HepG2 (cell line): ENCODE measurements at regions of chr17 and their contacts with region 1.

Region 1: GRCh38 chr17:45148183-45149036 is at the start of gene HEXIM1:
- DNase-seq: peak; percentile 100
- ATAC-seq: peak; percentile 78
- H3K4me3 ChIP-seq: peak within 1 kb of the TSS; percentile 97 to 98 (median 97)
- H3K27ac ChIP-seq: peak within 1 kb of the TSS; percentile 97
- H3K4me1 ChIP-seq: peaks cover 24% of the 10 kb centered on the region
- H3K27me3 ChIP-seq: no peaks in the 10 kb centered on the region; a peak in 2 of 5 replicates
- CTCF ChIP-seq: peak; percentile 28
- EP300 ChIP-seq: peak; percentile 73 to 89
- POLR2A ChIP-seq: peak; percentile 100
- RAD21 ChIP-seq: peak; percentile 84
- total RNA-seq, gene HEXIM1: 10.5 and 14.8 TPM in 2 replicates

Region 2: GRCh38 chr17:45073414-45074070 is 74.9 kb before region 1 on chr17:
- CTCF ChIA-PET with region 1: no interaction called
- POLR2A ChIA-PET with region 1: no interaction called
- in situ Hi-C with region 1: no loop called
- intact Hi-C with region 1: no loop called
- DNase-seq: no peak
- ATAC-seq: no peak
- H3K4me3 ChIP-seq: no peak overlapping the region
- H3K27ac ChIP-seq: no peak overlapping the region
- H3K4me1 ChIP-seq: peaks cover 8% of the 10 kb centered on the region; the same call in 1 of the 2 replicates
- H3K27me3 ChIP-seq: no peaks in the 10 kb centered on the region
- CTCF ChIP-seq: no peak
- EP300 ChIP-seq: no peak
- POLR2A ChIP-seq: no peak
- RAD21 ChIP-seq: no peak

Region 3: GRCh38 chr17:45135192-45135977 is 13.0 kb before region 1 on chr17 and contains the start of gene ACBD4:
- CTCF ChIA-PET with region 1: interaction called, 60 read pairs
- POLR2A ChIA-PET with region 1: interaction called, 217 read pairs
- in situ Hi-C with region 1: no loop called
- intact Hi-C with region 1: loop called (anchors 1 kb)
- DNase-seq: peak; percentile 100
- ATAC-seq: peak; percentile 85
- H3K4me3 ChIP-seq: peak within 1 kb of the TSS; percentile 70 to 83 (median 78)
- H3K27ac ChIP-seq: peak within 1 kb of the TSS; percentile 64
- H3K4me1 ChIP-seq: peaks cover 43% of the 10 kb centered on the region
- H3K27me3 ChIP-seq: no peaks in the 10 kb centered on the region
- CTCF ChIP-seq: peak; percentile 100
- EP300 ChIP-seq: peak in 1 of 2 experiments; percentile 41; a peak in 2 of 4 replicates
- POLR2A ChIP-seq: peak; percentile 71 to 97
- RAD21 ChIP-seq: peak; percentile 100
- total RNA-seq, gene ACBD4: 8.8 and 16.1 TPM in 2 replicates

Region 4: DNA sequence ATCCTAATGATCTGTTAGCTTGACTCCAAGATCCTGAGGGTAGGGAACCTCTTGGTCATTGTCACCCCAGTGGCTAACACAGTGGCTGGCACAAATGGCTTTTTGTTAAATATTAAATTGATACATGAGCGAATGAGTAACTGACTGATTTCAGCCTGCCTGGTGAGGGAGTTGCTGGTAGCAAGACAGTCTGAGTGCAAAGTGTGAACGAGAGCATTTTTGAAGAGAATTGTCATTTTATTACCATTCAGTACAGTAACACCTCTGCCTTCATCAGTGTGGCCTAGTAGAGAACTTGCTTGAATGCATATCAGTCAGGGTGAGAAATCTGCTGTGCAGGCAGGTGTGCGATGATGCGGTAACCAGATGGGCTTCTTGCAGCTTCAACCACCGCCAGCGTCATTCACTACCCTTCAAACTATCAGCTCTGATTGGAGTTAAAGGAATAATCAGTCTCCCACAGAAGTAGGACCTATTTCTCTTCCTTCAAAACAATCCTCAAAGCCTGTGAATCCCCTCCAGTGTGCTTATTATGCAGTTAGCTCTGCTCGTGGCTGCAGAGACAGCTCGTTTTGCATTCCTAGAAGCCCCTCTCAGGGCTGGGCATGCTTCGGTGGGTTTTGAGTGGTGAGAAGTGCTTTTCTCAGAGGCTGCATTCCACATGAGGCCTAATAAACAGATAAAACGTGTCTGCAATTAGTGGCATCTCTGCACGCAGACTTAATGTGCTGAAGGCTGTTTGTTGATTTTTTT is 42.3 kb after region 1 on chr17:
- CTCF ChIA-PET with region 1: interaction called, 130 read pairs
- POLR2A ChIA-PET with region 1: interaction called, 551 read pairs
- in situ Hi-C with region 1: loop called (anchors 5 kb)
- intact Hi-C with region 1: no loop called
- DNase-seq: no peak
- ATAC-seq: peak; percentile 29
- H3K4me3 ChIP-seq: 0 out of 6 replicates have a peak overlapping the region, but pooled peaks of 1 of the 3 experiments have one; percentile 11
- H3K27ac ChIP-seq: no peak overlapping the region
- H3K4me1 ChIP-seq: peaks cover 52% of the 10 kb centered on the region
- H3K27me3 ChIP-seq: no peaks in the 10 kb centered on the region
- CTCF ChIP-seq: no peak
- EP300 ChIP-seq: no peak
- POLR2A ChIP-seq: no peak
- RAD21 ChIP-seq: no peak

Region 5: DNA sequence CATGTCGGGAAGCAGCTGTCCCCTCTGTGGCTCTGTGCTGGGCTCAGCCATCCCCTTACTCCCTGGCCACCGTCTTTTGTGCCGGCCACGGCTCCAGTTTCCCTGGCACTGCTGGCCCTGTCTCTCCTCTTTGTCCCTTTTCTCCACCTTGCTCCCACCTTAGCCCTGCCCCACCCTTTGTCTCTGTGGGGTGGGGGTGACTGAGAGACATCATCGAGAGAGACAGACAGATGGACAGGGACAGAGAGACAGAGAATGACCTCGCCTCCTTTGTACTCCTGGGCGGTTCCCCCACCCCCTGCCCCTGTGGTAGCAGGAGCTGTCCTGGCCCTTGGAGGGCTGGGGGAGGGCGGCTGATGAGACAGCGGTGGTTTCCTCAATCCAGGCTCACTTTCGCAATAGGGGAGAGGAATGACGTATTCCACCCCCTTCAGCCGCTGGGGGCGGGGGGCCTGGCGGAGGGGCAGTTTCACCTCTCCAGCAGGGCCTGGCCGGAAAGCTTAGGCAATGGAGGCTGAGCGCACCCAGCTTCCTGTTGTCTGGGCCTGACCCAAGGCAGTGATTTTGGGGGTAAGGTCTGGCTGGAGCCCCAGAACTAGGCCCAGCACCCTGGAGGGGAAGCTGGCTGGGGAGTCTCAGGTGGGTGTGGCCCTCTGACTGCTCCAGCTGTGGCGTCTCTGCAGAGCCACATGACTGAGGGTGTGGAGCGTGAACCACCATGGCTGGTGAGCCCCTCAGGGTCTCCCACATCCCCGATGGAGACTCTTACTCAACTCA is 80.5 kb after region 1 on chr17:
- CTCF ChIA-PET with region 1: no interaction called
- POLR2A ChIA-PET with region 1: interaction called, 66 read pairs
- in situ Hi-C with region 1: no loop called
- intact Hi-C with region 1: no loop called
- DNase-seq: peak; percentile 56
- ATAC-seq: peak; percentile 3; the same call in 2 of the 3 replicates
- H3K4me3 ChIP-seq: peak overlapping the region; percentile 7 to 62 (median 19); a peak in 4 of 6 replicates
- H3K27ac ChIP-seq: no peak overlapping the region
- H3K4me1 ChIP-seq: peaks cover 71% of the 10 kb centered on the region
- H3K27me3 ChIP-seq: peaks cover 10 to 40% of the 10 kb centered on the region in 2 experiments; a peak in 4 of 5 replicates
- CTCF ChIP-seq: no peak
- EP300 ChIP-seq: no peak
- POLR2A ChIP-seq: no peak
- RAD21 ChIP-seq: no peak

Region 6: DNA sequence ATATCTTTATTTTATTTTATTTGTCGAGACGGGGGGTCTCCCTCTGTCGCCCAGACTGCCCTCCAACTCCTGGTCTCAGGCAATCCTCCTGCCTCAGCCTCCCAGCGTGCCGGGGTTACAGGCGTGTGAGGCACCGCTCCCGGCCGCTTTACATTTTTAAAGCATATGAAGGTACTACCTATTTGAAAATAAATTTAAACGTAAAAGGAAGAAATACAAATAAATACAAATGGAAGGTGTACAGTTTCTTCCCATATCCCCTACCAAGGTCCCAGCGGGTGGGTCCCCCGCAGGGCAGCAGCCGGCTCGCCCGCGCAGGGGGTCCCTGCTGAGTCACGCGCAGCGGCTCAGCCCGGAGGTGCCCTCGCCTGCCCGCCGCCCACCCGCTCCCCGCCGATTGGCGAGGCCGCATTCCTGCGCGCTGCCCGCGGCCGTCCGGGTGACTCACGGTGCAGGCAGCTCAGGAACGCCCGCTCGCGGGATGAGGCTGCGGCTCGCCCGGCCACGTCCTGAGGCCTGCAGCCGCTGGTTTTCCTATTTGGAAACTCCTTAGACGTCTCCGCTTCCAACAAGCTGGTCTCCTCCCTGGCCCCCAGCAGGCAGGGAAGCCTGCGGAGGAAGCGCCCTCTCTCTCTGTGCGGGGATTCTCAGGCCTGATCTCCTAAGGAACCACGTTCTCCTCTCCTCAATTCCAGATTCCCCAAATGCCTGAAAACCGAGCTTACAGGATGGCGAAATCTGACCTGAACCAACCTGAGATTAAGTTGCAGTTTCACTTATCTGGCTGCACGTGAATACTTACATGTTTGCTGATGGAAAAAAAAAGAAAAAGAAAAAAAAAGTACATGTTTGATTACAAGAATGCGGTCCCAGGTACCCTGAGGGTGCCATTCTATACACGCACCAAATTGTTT is 223.3 kb after region 1 on chr17:
- CTCF ChIA-PET with region 1: no interaction called
- POLR2A ChIA-PET with region 1: interaction called, 12 read pairs
- in situ Hi-C with region 1: no loop called
- intact Hi-C with region 1: no loop called
- DNase-seq: peak; percentile 89
- ATAC-seq: peak; percentile 97
- H3K4me3 ChIP-seq: peak overlapping the region; percentile 66 to 76 (median 67)
- H3K27ac ChIP-seq: peak overlapping the region; percentile 66
- H3K4me1 ChIP-seq: peaks cover 47% of the 10 kb centered on the region
- H3K27me3 ChIP-seq: peaks cover 0 to 3% of the 10 kb centered on the region in 2 experiments; a peak in 1 of 5 replicates
- CTCF ChIP-seq: peak; percentile 48
- EP300 ChIP-seq: peak in 1 of 2 experiments; percentile 18; a peak in 2 of 4 replicates
- POLR2A ChIP-seq: peak in 1 of 2 experiments; percentile 87; a peak in 2 of 4 replicates
- RAD21 ChIP-seq: peak; percentile 65